Prostate gland (tissue), 2 donors: ENCODE measurements at regions of chr3 and their contacts with region 1.

Region 1: GRCh38 chr3:89113903-89114840 is 6.8 kb downstream of the EPHA3 start:
- DNase-seq: peak; percentile 66
- H3K4me3 ChIP-seq: peak overlapping the region; percentile 31 to 34
- H3K27ac ChIP-seq: peak overlapping the region; percentile 62 to 63
- H3K4me1 ChIP-seq: no peaks in the 10 kb centered on the region
- H3K27me3 ChIP-seq: no peaks in the 10 kb centered on the region
- CTCF ChIP-seq: peak; percentile 17 to 59 (median 56)
- POLR2A ChIP-seq: no peak

Region 2: GRCh38 chr3:88219138-88219792 is 894.9 kb before region 1 on chr3:
- intact Hi-C with region 1: loop called (anchors 10 kb)
- DNase-seq: no peak
- H3K4me3 ChIP-seq: no peak overlapping the region
- H3K27ac ChIP-seq: no peak overlapping the region
- H3K4me1 ChIP-seq: no peaks in the 10 kb centered on the region
- H3K27me3 ChIP-seq: no peaks in the 10 kb centered on the region
- CTCF ChIP-seq: peak in 2 of 4 experiments; percentile 19 to 24
- POLR2A ChIP-seq: no peak

Region 3: GRCh38 chr3:88589138-88589537 is 525.0 kb before region 1 on chr3:
- intact Hi-C with region 1: no loop called
- DNase-seq: no peak
- H3K4me3 ChIP-seq: no peak overlapping the region
- H3K27ac ChIP-seq: no peak overlapping the region
- H3K4me1 ChIP-seq: no peaks in the 10 kb centered on the region
- H3K27me3 ChIP-seq: no peaks in the 10 kb centered on the region
- CTCF ChIP-seq: no peak
- POLR2A ChIP-seq: no peak

Region 4: GRCh38 chr3:89087851-89088250 is 26.3 kb before region 1 on chr3:
- intact Hi-C with region 1: no loop called
- DNase-seq: no peak
- H3K4me3 ChIP-seq: no peak overlapping the region
- H3K27ac ChIP-seq: no peak overlapping the region
- H3K4me1 ChIP-seq: no peaks in the 10 kb centered on the region
- H3K27me3 ChIP-seq: no peaks in the 10 kb centered on the region
- CTCF ChIP-seq: no peak
- POLR2A ChIP-seq: no peak

Region 5: GRCh38 chr3:89212619-89213018 is 98.4 kb after region 1 on chr3:
- intact Hi-C with region 1: loop called (anchors 5 kb)
- DNase-seq: no peak
- H3K4me3 ChIP-seq: no peak overlapping the region
- H3K27ac ChIP-seq: no peak overlapping the region
- H3K4me1 ChIP-seq: no peaks in the 10 kb centered on the region
- H3K27me3 ChIP-seq: no peaks in the 10 kb centered on the region
- CTCF ChIP-seq: no peak
- POLR2A ChIP-seq: no peak

Region 6: GRCh38 chr3:89314454-89315098 is 200.4 kb after region 1 on chr3:
- intact Hi-C with region 1: loop called (anchors 10 kb)
- DNase-seq: no peak
- H3K4me3 ChIP-seq: no peak overlapping the region
- H3K27ac ChIP-seq: no peak overlapping the region
- H3K4me1 ChIP-seq: no peaks in the 10 kb centered on the region
- H3K27me3 ChIP-seq: no peaks in the 10 kb centered on the region
- CTCF ChIP-seq: peak in 1 of 4 experiments; percentile 4
- POLR2A ChIP-seq: no peak

Region 7: GRCh38 chr3:89340408-89340807 is 226.2 kb after region 1 on chr3:
- intact Hi-C with region 1: no loop called
- DNase-seq: no peak
- H3K4me3 ChIP-seq: no peak overlapping the region
- H3K27ac ChIP-seq: no peak overlapping the region
- H3K4me1 ChIP-seq: no peaks in the 10 kb centered on the region
- H3K27me3 ChIP-seq: no peaks in the 10 kb centered on the region
- CTCF ChIP-seq: no peak
- POLR2A ChIP-seq: no peak